BJ (cell line): ENCODE measurements at regions of chr2 and their contacts with region 1.

Region 1: DNA sequence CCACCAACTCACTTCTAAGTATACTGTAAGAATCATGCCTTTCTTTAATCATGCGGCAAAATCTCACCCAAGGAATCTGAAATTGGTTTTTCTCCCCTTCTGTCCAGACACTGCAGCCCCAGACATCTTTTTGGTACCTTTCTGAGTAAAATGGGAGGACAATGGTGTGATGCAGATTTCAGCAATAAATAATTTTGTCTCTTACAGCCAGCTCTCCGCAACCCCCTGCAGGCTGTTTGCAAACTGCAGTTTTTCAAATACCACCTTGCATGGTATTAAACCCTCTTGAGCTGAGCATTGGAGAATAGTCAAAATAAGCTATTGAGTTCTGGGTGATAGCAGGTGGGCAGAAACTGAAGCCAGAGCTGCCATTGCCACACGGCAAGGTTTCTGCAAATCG is 32.2 kb downstream of the GPR39 start:
- DNase-seq: no peak
- H3K4me3 ChIP-seq: no peak overlapping the region
- H3K27me3 ChIP-seq: no peaks in the 10 kb centered on the region
- CTCF ChIP-seq: peak; percentile 78

Region 2: DNA sequence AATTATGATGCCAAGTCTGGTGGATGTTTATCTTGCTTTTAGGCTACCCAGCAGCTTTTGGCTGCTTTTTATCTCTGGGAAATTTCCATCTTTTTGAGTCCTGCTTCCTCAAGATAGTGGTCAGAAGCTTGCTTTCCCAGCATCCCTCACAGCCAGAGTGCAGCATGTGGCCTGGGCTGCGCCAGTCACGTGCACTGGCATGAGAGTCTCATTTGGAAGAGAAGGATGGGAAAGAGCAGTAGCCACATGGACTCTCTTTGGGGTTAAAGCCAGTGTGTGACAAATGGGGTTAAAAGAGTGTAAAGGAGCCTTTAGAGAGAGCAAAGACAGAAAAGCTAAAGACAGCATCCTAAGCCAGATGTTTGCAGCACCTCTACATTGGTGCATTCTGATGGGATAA is 19.4 kb before region 1 on chr2:
- CTCF ChIA-PET with region 1: interaction called, 10 read pairs
- POLR2A ChIA-PET with region 1: no interaction called
- DNase-seq: no peak
- H3K4me3 ChIP-seq: no peak overlapping the region
- H3K27me3 ChIP-seq: no peaks in the 10 kb centered on the region
- CTCF ChIP-seq: no peak

Region 3: DNA sequence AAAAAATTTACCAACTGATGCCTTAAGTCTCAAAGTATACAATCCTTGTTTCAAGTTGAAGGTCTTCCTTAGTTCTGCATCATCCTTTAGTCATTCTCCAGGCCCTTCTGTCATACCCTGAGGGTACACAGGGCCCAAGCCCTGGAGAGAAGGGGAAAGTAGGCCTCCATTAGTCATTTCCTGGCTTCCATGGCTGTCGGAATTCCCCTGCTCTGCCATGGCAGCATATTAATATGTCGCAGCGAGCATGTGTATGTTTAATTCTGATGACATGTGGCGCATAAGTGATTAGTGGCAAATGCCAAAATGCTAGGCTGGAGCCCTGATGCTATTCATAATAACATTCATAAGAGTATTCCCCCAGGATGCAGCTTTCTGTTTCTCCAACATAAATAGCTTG is 10.1 kb before region 1 on chr2:
- CTCF ChIA-PET with region 1: interaction called, 16 read pairs
- POLR2A ChIA-PET with region 1: no interaction called
- DNase-seq: peak; percentile 86
- H3K4me3 ChIP-seq: no peak overlapping the region
- H3K27me3 ChIP-seq: no peaks in the 10 kb centered on the region
- CTCF ChIP-seq: no peak

Region 4: GRCh38 chr2:132460781-132461180 is 12.0 kb after region 1 on chr2:
- CTCF ChIA-PET with region 1: interaction called, 10 read pairs
- POLR2A ChIA-PET with region 1: no interaction called
- DNase-seq: no peak
- H3K4me3 ChIP-seq: no peak overlapping the region
- H3K27me3 ChIP-seq: no peaks in the 10 kb centered on the region
- CTCF ChIP-seq: no peak

Region 5: DNA sequence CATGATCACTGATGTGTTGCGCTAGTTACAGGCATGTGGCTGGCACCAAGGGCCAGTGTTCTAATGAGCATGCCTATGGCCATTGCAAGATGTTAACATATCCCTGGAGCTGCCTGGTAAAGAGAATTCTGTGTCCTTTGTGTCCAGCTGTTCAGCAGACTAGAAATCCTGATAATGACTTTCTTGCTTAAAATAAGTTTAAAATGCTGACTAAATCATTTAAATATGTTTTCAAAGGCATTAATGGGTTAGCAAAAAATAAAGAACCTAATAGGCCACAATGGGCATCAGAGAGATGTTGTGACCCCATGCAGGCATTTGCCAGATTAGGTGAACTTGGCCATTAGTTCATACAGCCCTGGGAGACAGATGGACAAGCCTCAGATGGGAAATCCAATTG is 35.4 kb after region 1 on chr2:
- CTCF ChIA-PET with region 1: no interaction called
- POLR2A ChIA-PET with region 1: no interaction called
- DNase-seq: no peak
- H3K4me3 ChIP-seq: no peak overlapping the region
- H3K27me3 ChIP-seq: no peaks in the 10 kb centered on the region
- CTCF ChIP-seq: no peak

Region 6: DNA sequence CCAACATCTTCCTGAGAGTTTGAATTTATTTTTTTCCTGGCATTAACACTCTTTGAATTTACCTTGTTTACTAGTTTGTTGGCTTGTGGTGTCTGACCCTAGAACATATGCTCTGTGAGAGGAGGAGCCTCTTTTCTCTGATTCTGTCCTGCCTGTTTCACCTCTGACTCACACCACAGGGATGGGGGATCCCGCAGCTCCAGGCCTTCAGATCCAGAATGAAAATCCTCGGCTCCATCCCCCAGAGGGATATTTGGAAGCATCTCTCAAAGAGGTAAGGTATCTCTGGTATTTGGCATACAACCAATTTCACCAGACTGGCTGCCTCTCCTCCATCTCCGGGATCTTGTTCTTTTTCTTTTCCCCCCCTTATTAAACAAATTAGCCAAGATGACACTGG is 72.6 kb after region 1 on chr2:
- CTCF ChIA-PET with region 1: no interaction called
- POLR2A ChIA-PET with region 1: no interaction called
- DNase-seq: no peak
- H3K4me3 ChIP-seq: no peak overlapping the region
- H3K27me3 ChIP-seq: no peaks in the 10 kb centered on the region
- CTCF ChIP-seq: no peak